ENCODE measurements at regions of chr16 and their contacts with region 1.

Region 1: GRCh38 chr16:1959269-1960049 is at the start of gene NDUFB10:
- DNase-seq: peak; percentile 96
- ATAC-seq: peak; percentile 86
- H3K4me3 Mint-ChIP-seq: peak within 1 kb of the TSS; percentile 91
- H3K27ac Mint-ChIP-seq: peak within 1 kb of the TSS; percentile 86
- H3K4me1 Mint-ChIP-seq: peaks cover 49% of the 10 kb centered on the region
- H3K27me3 Mint-ChIP-seq: no peaks in the 10 kb centered on the region
- CTCF ChIP-seq: no peak
- total RNA-seq, gene NDUFB10: 77.4 and 92.5 TPM in 2 replicates

Region 2: DNA sequence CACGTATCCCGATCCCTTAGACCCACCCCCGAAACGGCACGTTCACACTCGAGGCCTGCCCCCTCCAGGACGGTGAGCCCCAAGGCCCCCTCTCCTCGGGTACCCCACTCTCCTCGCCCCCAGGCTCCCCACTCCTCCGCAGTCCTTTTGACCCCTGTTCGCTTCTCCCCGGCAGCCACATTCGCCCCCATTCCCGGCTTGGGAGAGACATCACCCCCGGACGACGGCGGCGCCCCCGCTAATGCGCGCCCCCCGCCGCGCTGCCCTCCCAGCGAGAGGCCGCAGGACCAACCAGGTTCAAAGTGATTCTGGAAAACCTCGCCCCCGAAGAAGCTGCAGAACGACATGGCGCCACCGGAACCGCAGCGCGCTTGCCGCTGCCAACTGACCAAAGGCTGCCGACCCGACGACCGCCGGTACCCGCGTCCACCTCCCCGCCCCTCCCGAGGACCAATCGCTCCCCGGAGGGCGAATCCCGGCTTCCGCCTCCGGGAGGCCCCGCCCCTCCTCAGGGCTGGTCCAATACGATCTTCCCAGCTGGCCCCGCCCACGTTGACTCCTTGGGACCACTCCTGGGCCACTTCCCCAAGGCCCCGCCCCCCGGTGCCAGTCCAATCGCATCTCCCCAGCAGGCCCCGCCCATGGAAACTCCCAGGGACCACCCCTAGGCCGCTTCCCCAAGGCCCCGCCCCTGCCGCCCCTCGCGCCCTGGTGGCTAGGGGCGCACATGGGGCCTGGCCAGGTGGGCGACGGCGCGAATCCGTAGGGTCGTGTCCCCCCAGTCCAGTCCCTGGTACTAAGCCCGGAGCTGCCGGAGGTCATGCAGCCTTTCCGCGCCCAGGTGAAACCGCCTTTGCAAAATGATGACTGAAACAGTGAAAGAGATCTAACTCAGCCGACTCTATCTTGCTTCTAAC is 16.4 kb before region 1 on chr16 and contains the start of gene MSRB1:
- CTCF ChIA-PET with region 1: interaction called, 3 read pairs
- POLR2A ChIA-PET with region 1: interaction called, 44 read pairs
- intact Hi-C with region 1: loop called (anchors 1 kb)
- DNase-seq: peak; percentile 99
- ATAC-seq: peak; percentile 98
- H3K4me3 Mint-ChIP-seq: peak within 1 kb of the TSS; percentile 87
- H3K27ac Mint-ChIP-seq: peak within 1 kb of the TSS; percentile 74
- H3K4me1 Mint-ChIP-seq: peaks cover 30% of the 10 kb centered on the region
- H3K27me3 Mint-ChIP-seq: no peaks in the 10 kb centered on the region
- CTCF ChIP-seq: no peak
- total RNA-seq, gene MSRB1: 14.7 and 16.6 TPM in 2 replicates

Region 3: GRCh38 chr16:1971796-1972489 is 12.5 kb after region 1 on chr16 and contains the start of gene TBL3:
- CTCF ChIA-PET with region 1: no interaction called
- POLR2A ChIA-PET with region 1: interaction called, 351 read pairs
- intact Hi-C with region 1: loop called (anchors 1 kb)
- DNase-seq: peak; percentile 99
- ATAC-seq: peak; percentile 97
- H3K4me3 Mint-ChIP-seq: peak within 1 kb of the TSS; percentile 93
- H3K27ac Mint-ChIP-seq: peak within 1 kb of the TSS; percentile 97
- H3K4me1 Mint-ChIP-seq: peaks cover 23% of the 10 kb centered on the region
- H3K27me3 Mint-ChIP-seq: no peaks in the 10 kb centered on the region
- CTCF ChIP-seq: no peak
- total RNA-seq, gene TBL3: 41.8 and 44.2 TPM in 2 replicates

Region 4: GRCh38 chr16:2047330-2048115 is 88.1 kb after region 1 on chr16 and contains the starts of genes NTHL1 and TSC2:
- CTCF ChIA-PET with region 1: no interaction called
- POLR2A ChIA-PET with region 1: interaction called, 12 read pairs
- intact Hi-C with region 1: loop called (anchors 1 kb)
- DNase-seq: peak; percentile 93
- ATAC-seq: peak; percentile 95
- H3K4me3 Mint-ChIP-seq: peak within 1 kb of the TSS; percentile 89
- H3K27ac Mint-ChIP-seq: peak within 1 kb of the TSS; percentile 66
- H3K4me1 Mint-ChIP-seq: peaks cover 24% of the 10 kb centered on the region
- H3K27me3 Mint-ChIP-seq: no peaks in the 10 kb centered on the region
- CTCF ChIP-seq: no peak
- total RNA-seq, gene NTHL1: 10.5 and 11.5 TPM in 2 replicates
- total RNA-seq, gene TSC2: 130 and 139 TPM in 2 replicates

Region 5: DNA sequence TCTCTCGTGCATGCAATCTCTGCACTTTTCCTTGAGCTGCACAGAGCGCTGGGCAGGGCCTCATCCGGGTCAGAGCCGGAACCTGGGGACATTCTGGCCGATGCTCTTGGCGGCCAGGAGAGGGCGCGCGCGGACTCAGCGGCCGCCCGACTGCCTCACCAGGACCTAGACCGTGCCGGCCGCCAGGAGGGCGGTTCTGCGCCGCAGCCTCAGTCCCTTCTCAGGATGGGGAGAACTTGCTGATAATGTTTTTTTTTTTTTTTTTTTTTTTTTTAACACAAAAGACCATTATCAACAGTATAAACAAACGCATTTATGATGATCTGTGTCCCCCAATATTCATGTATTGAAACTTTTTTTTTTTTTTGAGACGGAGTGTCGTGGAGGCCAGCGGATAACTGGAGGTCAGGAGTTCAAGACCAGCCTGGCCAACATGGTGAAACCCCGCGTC is 915.5 kb after region 1 on chr16:
- CTCF ChIA-PET with region 1: no interaction called
- POLR2A ChIA-PET with region 1: interaction called, 11 read pairs
- intact Hi-C with region 1: no loop called
- DNase-seq: peak; percentile 51
- ATAC-seq: peak; percentile 100
- H3K4me3 Mint-ChIP-seq: no peak overlapping the region
- H3K27ac Mint-ChIP-seq: no peak overlapping the region
- H3K4me1 Mint-ChIP-seq: no peaks in the 10 kb centered on the region
- H3K27me3 Mint-ChIP-seq: peaks cover 1% of the 10 kb centered on the region
- CTCF ChIP-seq: peak; percentile 54